ENCODE measurements at regions of chr10 and their contacts with region 1.

Region 1: GRCh38 chr10:100185364-100186252 is at the start of gene ERLIN1:
- DNase-seq: peak; percentile 93
- H3K4me3 ChIP-seq: peak within 1 kb of the TSS; percentile 90
- H3K27ac ChIP-seq: peak within 1 kb of the TSS; percentile 85
- H3K4me1 ChIP-seq: peaks cover 36% of the 10 kb centered on the region
- CTCF ChIP-seq: peak; percentile 57
- total RNA-seq, gene ERLIN1: 24.7 and 26.7 TPM in 2 replicates

Region 2: GRCh38 chr10:100229819-100230422 is 44.3 kb after region 1 on chr10:
- CTCF ChIA-PET with region 1: no interaction called
- POLR2A ChIA-PET with region 1: interaction called, 4 read pairs
- intact Hi-C with region 1: loop called (anchors 1 kb)
- DNase-seq: no peak
- H3K4me3 ChIP-seq: peak overlapping the region; percentile 83
- H3K27ac ChIP-seq: peak overlapping the region; percentile 29
- H3K4me1 ChIP-seq: peaks cover 27% of the 10 kb centered on the region
- CTCF ChIP-seq: no peak

Measured in OCI-LY7 (cell line).